ENCODE measurements at regions of chr11 and their contacts with region 1.

Region 1: DNA sequence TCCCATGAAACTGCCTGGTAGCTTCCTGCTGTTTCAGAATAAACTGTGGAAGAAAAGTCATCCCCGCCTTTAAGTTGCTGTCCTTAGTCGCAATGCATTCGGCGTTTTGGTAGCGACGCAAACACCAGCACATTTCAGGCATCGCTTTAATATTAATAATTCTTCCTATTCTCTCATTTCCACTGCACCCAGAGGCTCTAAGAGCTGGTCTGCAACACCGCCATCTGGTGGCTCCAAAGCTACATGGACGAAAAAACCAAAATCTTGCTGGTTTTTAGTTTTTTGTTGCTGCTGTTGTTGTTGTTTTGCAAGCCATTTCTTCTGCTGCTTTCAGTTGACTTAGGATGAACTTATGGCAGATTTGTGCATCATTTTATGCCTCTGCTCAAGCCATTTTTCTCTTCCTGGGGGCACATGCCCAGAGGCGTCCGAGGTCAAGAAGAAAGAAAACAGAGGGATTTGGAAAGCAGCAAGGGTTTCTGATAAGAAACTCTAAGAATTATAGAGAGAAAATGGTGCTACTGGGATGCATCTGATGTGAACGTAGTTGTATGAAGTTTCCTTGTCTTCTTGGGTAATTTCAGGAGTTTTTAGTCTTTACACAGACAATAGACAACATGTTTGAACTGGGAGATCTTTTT is 345.4 kb upstream of the KIRREL3 start:
- DNase-seq: no peak
- H3K4me3 ChIP-seq: no peak overlapping the region
- H3K27me3 ChIP-seq: no peaks in the 10 kb centered on the region
- CTCF ChIP-seq: peak; percentile 87

Region 2: GRCh38 chr11:126440792-126441514 is 905.0 kb before region 1 on chr11:
- CTCF ChIA-PET with region 1: interaction called, 13 read pairs
- POLR2A ChIA-PET with region 1: no interaction called
- DNase-seq: no peak
- H3K4me3 ChIP-seq: no peak overlapping the region
- H3K27me3 ChIP-seq: no peaks in the 10 kb centered on the region
- CTCF ChIP-seq: peak; percentile 90

Region 3: DNA sequence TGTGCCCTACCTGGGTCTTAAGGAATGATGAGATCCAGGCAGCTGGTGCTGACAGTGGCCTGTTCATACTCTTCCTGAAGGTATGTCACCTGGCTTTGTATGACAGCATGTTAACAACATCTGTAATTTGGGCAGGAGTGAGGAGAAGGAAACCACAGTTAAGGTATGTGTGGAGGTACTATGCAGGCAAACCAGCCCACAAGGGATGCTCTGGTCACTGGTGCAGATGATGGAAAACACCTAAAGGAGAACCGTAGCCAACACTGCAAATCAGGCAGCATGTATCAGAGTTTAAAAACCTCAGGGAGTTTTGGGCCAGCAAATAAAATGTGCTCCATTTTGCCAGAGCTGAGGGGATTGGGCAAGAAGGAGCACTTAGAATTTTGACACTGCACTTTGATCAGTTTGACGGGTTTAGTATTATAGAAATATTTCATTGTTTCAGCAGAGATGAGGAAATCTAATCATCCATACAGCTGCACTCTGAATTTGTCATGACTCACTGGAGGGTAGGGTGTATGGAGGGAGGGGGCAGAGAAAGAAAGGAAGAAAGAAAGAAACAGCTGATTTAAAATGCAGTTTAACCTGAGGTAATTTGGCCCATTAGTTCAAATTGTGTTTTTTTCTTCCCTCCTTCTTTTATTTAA is 606.3 kb before region 1 on chr11:
- CTCF ChIA-PET with region 1: no interaction called
- POLR2A ChIA-PET with region 1: no interaction called
- DNase-seq: no peak
- H3K4me3 ChIP-seq: no peak overlapping the region
- H3K27me3 ChIP-seq: no peaks in the 10 kb centered on the region
- CTCF ChIP-seq: no peak

Region 4: DNA sequence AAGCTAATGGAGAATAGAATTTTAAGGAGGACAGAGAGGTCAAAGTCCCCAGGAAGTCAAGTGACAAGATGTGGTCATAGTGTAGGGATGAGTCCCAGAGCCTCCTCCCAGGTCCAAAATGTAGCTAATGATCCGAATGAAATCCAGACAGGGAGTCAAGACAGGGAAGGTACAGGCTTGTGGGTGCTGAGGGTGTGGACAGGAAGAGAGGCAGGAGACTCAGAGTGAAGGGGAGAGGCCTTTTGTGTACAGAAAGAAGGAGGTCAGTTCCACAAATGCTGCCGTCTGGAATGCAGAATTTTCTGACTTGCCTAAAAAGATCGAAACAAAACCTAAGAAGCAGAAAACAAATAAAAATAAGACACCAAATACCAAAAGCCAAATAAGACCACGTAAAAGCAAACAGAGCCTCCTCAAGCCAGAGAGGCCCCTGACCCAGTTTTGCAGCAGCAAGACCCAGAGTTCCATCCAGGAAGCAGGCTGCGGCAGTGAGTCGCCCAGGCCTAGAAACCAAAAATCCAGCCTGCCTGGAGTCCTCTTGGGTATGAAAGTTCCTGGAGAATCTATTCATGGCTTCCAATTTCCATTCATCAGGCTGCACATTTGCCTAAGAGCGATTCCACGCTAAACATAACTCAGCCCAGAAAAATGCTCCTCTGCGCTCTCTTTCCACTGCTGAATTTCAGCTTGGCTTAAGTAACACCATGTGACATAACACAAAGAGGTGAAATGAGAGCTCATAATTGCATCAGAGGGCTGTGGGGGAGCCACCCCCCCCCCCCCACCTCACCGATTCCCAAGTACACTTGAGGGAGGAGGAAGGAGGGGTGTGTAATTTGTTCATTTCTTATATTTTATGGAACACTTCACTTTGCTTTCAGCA is 416.5 kb before region 1 on chr11:
- CTCF ChIA-PET with region 1: no interaction called
- POLR2A ChIA-PET with region 1: no interaction called
- DNase-seq: peak; percentile 57
- H3K4me3 ChIP-seq: no peak overlapping the region
- H3K27me3 ChIP-seq: no peaks in the 10 kb centered on the region
- CTCF ChIP-seq: no peak

Region 5: GRCh38 chr11:126981635-126982034 is 364.3 kb before region 1 on chr11:
- CTCF ChIA-PET with region 1: no interaction called
- POLR2A ChIA-PET with region 1: no interaction called
- DNase-seq: no peak
- H3K4me3 ChIP-seq: no peak overlapping the region
- H3K27me3 ChIP-seq: no peaks in the 10 kb centered on the region
- CTCF ChIP-seq: no peak